ENCODE measurements at regions of chr3 and their contacts with region 1.

Region 1: DNA sequence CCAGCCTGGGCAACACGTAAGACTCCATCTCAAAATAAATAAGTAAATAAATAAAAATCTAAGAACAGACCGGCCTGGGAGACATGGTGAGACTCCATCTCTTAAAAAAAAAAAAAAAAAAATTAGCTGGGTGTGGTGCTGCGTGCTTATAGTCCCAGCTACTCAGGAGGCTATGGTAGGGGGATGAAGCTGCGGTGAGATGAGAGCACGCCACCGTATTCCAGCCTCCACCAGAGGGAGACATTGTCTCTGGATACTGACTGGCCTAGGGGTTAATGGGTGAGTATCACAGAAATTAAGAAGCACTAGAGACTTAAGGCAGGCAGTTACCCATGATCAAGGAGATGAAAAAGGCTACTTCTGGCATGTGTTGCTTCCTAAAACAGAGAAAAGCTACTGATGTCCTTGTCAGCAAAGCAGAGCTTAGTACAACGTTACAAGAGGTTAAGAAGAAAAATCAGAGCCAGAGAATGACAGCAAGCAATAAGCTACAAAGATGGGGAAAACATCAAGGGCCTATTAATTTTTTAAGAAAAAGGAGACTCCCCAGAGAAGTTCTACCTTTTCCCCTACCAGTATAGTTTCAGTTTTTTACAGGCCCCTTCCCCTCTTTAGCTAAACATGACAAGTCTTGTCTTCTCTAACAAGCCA is 8.6 kb downstream of the TFRC start:
- DNase-seq: peak; percentile 80
- ATAC-seq: peak; percentile 92
- H3K4me3 Mint-ChIP-seq: no peak overlapping the region
- H3K27ac Mint-ChIP-seq: peak overlapping the region; percentile 71
- H3K4me1 Mint-ChIP-seq: peaks cover 47% of the 10 kb centered on the region
- H3K27me3 Mint-ChIP-seq: no peaks in the 10 kb centered on the region

Region 2: GRCh38 chr3:195475614-195476013 is 597.7 kb before region 1 on chr3:
- CTCF ChIA-PET with region 1: no interaction called
- DNase-seq: no peak
- ATAC-seq: no peak
- H3K4me3 Mint-ChIP-seq: no peak overlapping the region
- H3K27ac Mint-ChIP-seq: no peak overlapping the region
- H3K4me1 Mint-ChIP-seq: no peaks in the 10 kb centered on the region
- H3K27me3 Mint-ChIP-seq: peaks cover 9% of the 10 kb centered on the region

Region 3: DNA sequence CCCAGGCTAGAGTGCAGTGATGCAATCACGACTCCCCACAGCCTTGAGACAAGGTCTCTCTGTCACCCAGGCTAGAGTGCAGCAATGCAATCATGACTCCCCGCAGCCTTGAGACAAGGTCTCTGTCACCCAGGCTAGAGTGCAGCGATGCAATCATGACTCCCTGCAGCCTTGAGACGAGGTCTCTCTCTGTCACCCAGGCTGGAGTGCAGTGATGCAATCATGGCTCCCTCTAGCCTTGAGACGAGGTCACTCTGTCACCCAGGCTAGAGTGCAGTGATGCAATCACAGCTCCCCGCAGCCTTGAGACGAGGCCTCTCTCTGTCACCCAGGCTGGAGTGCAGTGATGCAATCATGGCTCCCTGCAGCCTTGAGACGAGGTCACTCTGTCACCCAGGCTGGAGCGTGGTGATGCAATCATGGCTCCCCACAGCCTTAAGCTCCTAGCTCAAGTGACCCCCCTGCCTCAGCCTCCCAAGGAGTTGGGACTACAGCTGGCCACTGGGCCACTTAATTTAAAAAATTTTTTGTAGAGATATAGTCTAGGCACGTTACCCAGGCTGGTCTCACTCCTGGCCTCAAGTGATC is 17.5 kb before region 1 on chr3:
- CTCF ChIA-PET with region 1: interaction called, 21 read pairs
- DNase-seq: no peak
- ATAC-seq: no peak
- H3K4me3 Mint-ChIP-seq: no peak overlapping the region
- H3K27ac Mint-ChIP-seq: no peak overlapping the region
- H3K4me1 Mint-ChIP-seq: peaks cover 4% of the 10 kb centered on the region
- H3K27me3 Mint-ChIP-seq: no peaks in the 10 kb centered on the region

Region 4: DNA sequence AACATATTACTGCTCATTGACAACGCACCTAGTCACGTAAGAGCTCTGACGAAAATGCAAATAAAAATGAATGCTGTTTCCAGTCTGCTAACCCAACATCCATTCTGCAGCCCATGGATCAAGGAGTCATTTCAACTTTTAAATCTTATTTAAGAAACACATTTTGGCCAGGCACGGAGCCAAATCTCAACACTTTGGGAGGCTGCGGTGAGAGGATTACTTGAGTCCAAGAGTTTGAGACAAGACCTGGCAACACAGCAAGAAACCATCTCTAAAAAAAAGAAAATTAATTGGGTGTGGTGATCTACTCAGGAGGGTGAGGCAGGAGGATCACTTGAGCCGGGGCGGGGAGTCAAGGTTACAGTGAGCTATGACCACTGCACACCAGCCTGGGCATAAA is 287.3 kb after region 1 on chr3:
- CTCF ChIA-PET with region 1: no interaction called
- DNase-seq: no peak
- ATAC-seq: no peak
- H3K4me3 Mint-ChIP-seq: no peak overlapping the region
- H3K27ac Mint-ChIP-seq: no peak overlapping the region
- H3K4me1 Mint-ChIP-seq: peaks cover 12% of the 10 kb centered on the region
- H3K27me3 Mint-ChIP-seq: no peaks in the 10 kb centered on the region

Region 5: GRCh38 chr3:196754091-196754923 is 681.0 kb after region 1 on chr3:
- CTCF ChIA-PET with region 1: no interaction called
- DNase-seq: no peak
- ATAC-seq: no peak
- H3K4me3 Mint-ChIP-seq: no peak overlapping the region
- H3K27ac Mint-ChIP-seq: no peak overlapping the region
- H3K4me1 Mint-ChIP-seq: peaks cover 35% of the 10 kb centered on the region
- H3K27me3 Mint-ChIP-seq: no peaks in the 10 kb centered on the region

Measured in activated CD8-positive, alpha-beta memory T cell treated with anti-CD3 and anti-CD28 coated beads, Interleukin-2, amount 10 ng/mL, durations not matched to agents 7 days and 5 days (primary cell).